ENCODE measurements at regions of chr17 and their contacts with region 1.

Region 1: GRCh38 chr17:50139950-50140871 is 10.3 kb upstream of the SAMD14 start:
- DNase-seq: peak; percentile 81 to 88
- ATAC-seq: peak; percentile 88 to 90 (median 89)
- H3K4me3 ChIP-seq: no peak overlapping the region
- H3K4me3 Mint-ChIP-seq: peak overlapping the region; percentile 14
- H3K27ac ChIP-seq: peak overlapping the region; percentile 37
- H3K27ac Mint-ChIP-seq: peak overlapping the region; percentile 81 to 84
- H3K4me1 ChIP-seq: peaks cover 60% of the 10 kb centered on the region
- H3K4me1 Mint-ChIP-seq: peaks cover 58 to 82% of the 10 kb centered on the region in 2 donors
- H3K27me3 ChIP-seq: no peaks in the 10 kb centered on the region
- H3K27me3 Mint-ChIP-seq: no peaks in the 10 kb centered on the region
- CTCF ChIP-seq: peak; percentile 91

Region 2: DNA sequence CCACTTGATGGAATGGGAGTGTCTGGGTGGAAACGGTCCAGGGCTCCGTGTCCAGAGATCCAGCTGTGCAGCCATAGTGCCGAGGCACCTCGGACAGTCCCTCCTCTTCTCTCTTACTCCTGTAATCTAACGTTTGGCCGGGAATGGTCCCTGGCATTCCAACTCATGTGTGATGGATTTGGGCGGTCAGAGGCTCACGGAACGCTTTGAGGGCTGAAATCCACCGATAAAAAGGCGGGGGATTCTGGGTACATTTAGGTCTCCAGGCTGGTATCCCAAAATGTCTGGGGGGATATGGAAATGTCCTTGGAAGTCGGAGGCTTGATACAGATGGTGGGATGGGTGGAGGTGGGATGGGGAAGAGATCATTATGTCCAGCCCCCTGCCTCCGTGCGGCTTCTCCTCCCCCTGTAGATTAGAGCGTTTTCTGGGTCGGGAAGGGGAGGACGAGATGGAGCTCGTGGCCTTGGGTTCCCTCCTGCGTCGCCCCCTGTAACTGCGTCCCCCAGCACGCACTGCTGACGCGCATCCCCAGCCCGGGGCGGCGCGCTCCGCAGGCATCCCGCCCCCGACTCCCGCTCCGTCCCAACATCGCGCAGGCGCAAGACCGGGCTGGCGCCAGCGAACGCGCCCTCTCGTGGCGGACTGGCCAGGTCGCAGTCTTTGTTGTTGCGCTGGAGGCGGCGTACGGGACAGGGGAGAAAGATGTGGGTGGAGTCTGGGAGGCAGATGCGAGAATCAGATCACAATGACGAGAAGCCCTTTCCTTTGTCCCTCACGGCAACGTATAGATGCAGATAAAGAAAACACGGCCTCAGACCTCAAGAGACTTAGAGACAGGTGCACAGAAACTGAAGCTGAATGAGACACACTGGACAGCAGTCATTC is 21.1 kb after region 1 on chr17:
- intact Hi-C with region 1: loop called (anchors 1 kb)
- DNase-seq: peak; percentile 91 to 98
- ATAC-seq: peak; percentile 99
- H3K4me3 ChIP-seq: peak overlapping the region; percentile 30
- H3K4me3 Mint-ChIP-seq: peak overlapping the region; percentile 42
- H3K27ac ChIP-seq: no peak overlapping the region
- H3K27ac Mint-ChIP-seq: peak overlapping the region; percentile 19 to 73
- H3K4me1 ChIP-seq: peaks cover 22% of the 10 kb centered on the region
- H3K4me1 Mint-ChIP-seq: peaks cover 23 to 27% of the 10 kb centered on the region in 2 donors
- H3K27me3 ChIP-seq: no peaks in the 10 kb centered on the region
- H3K27me3 Mint-ChIP-seq: peaks cover 0 to 9% of the 10 kb centered on the region in 2 donors
- CTCF ChIP-seq: peak; percentile 94